ENCODE measurements at regions of chr1 and their contacts with region 1.

Region 1: DNA sequence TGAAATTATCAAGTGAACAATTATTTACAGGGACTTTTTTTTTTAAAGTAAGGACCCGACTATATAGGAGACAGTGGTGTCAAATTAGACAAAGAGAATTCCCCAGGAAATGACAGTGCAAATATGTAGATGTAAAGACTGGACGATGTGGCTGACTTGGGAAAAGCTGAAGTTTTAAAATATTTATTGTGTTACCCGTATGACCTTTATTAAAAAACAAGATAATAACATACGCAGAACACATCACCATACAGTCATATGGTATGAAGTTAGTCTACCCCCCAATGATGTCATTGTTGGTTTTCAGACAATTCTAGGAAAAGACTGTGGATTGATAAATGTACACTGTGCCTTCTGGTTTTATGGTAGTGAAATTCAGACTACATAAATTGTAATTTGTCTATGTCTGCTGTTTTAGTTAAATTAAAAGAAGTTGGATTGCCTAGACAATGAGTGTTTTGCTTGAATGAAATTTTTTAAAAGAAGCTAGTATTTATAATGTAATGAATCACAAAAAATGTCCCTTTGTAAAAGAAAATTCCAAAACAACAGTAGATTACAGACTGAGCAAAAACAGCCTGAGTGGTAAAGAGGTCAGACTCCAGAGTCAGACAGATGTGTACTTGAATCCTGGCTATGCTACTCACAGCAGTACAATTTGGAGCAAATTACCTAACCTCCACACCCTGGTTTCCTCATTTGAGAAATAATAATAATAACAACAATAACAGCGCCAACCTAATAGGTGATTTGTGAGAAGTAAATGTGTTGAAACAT is 15.5 kb upstream of the PDC start:
- DNase-seq: no peak
- H3K4me3 ChIP-seq: no peak overlapping the region
- H3K27ac ChIP-seq: no peak overlapping the region
- H3K4me1 ChIP-seq: no peaks in the 10 kb centered on the region
- H3K27me3 ChIP-seq: no peaks in the 10 kb centered on the region
- CTCF ChIP-seq: no peak

Region 2: GRCh38 chr1:186487163-186487562 is 10.7 kb after region 1 on chr1:
- intact Hi-C with region 1: no loop called
- DNase-seq: no peak
- H3K4me3 ChIP-seq: no peak overlapping the region
- H3K27ac ChIP-seq: no peak overlapping the region
- H3K4me1 ChIP-seq: no peaks in the 10 kb centered on the region
- H3K27me3 ChIP-seq: no peaks in the 10 kb centered on the region
- CTCF ChIP-seq: no peak

Region 3: DNA sequence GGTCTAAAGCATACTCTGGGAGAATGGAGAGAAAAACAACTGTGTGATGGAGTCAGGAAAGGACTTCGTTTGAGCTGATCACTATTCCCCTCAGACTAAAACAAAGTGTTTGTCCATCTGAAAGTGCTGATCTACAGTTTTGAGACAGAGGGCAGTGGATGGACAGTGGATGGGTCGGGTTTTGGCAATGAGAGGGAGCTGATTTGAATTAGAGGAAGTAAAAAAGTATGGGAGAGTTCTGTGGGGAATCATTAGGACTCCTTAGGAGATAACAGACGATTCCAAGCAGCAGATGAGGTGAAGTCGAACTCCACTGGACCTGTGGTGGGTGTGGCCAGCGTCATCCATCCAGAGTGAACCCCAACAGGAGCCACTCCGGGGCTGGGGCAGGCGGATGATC is 141.5 kb after region 1 on chr1:
- intact Hi-C with region 1: no loop called
- DNase-seq: no peak
- H3K4me3 ChIP-seq: peak overlapping the region; percentile 9 to 14
- H3K27ac ChIP-seq: no peak overlapping the region
- H3K4me1 ChIP-seq: no peaks in the 10 kb centered on the region
- H3K27me3 ChIP-seq: no peaks in the 10 kb centered on the region
- CTCF ChIP-seq: no peak

Region 4: DNA sequence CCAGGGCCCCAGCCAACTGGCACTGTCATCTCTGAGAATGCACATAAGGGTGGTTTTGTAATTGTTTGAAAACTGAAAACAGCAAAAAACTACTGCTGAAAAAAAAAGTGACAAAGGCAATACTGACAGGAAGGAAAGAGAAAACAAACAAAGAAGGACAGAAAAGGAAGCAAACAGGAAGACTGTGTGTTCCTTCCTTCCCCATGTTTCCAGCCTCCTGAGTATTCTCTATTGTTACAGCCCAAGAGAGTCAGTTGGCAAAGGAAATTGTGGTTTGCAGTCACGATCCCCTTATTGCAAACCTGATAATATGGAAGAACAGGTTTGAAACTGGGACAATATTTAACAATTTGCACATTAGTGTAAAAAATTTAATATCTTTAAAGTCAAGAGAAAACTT is 1529.9 kb after region 1 on chr1:
- intact Hi-C with region 1: loop called (anchors 5 kb)
- DNase-seq: no peak
- H3K4me3 ChIP-seq: no peak overlapping the region
- H3K27ac ChIP-seq: no peak overlapping the region
- H3K4me1 ChIP-seq: no peaks in the 10 kb centered on the region
- H3K27me3 ChIP-seq: no peaks in the 10 kb centered on the region
- CTCF ChIP-seq: no peak

Measured in tibial artery (tissue), 4 donors.